ENCODE measurements at regions of chr9 and their contacts with region 1.

Region 1: DNA sequence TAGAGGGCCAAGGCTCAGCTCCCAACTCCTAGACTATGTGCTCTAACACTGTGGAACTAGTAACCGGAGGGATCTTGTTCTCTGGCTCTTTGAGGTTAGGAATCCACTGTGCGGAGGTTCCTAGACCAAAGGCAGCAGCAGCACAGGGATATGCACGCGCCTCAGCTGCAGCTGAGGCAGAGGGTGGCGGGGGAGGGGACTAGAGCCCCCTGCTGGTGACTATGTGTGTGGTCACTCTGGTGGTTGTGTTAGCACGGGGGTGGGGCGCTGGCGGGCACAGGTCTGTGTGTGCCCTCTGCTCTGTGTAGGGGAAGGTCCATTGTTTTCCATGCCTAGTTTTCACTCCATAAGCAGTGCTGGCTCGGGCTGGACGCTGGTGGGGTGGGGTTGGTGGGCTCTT is 458.0 kb upstream of the IZUMO3 start:
- DNase-seq: no peak
- ATAC-seq: peak; percentile 94
- H3K4me3 ChIP-seq: no peak overlapping the region
- H3K27ac ChIP-seq: no peak overlapping the region
- H3K4me1 ChIP-seq: no peaks in the 10 kb centered on the region
- H3K27me3 ChIP-seq: no peaks in the 10 kb centered on the region
- CTCF ChIP-seq: peak in 2 of 3 experiments; percentile 7 to 38; a peak in 2 of 6 replicates
- EP300 ChIP-seq: no peak
- POLR2A ChIP-seq: no peak
- RAD21 ChIP-seq: no peak

Region 2: GRCh38 chr9:24738421-24738961 is 265.2 kb before region 1 on chr9:
- CTCF ChIA-PET with region 1: no interaction called
- POLR2A ChIA-PET with region 1: no interaction called
- RAD21 ChIA-PET with region 1: no interaction called
- SMC1A ChIA-PET with region 1: no interaction called
- in situ Hi-C with region 1: no loop called
- intact Hi-C with region 1: loop called (anchors 5 kb)
- DNase-seq: no peak
- ATAC-seq: no peak
- H3K4me3 ChIP-seq: no peak overlapping the region
- H3K27ac ChIP-seq: no peak overlapping the region
- H3K4me1 ChIP-seq: no peaks in the 10 kb centered on the region
- H3K27me3 ChIP-seq: no peaks in the 10 kb centered on the region
- CTCF ChIP-seq: no peak
- EP300 ChIP-seq: no peak
- POLR2A ChIP-seq: no peak
- RAD21 ChIP-seq: no peak

Region 3: DNA sequence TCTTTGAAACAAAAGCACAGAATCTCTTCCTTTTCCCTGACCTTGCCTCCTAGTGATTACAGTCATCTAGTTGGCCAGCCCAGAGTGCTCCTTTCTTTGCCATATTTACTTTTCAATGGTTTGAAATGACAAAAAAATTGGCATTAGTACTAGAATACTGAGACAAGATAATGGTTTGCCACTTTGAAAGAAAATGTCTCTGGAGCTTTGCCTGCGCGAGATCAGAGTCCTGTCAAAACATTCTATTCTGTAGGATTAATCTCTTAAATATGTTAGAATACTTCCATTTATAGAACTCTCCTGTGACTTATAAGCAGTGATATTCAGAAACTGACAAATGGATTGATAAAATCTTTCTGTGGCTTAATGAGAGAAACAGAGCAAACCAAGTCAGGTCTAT is 26.1 kb after region 1 on chr9:
- CTCF ChIA-PET with region 1: no interaction called
- POLR2A ChIA-PET with region 1: no interaction called
- RAD21 ChIA-PET with region 1: no interaction called
- SMC1A ChIA-PET with region 1: no interaction called
- in situ Hi-C with region 1: no loop called
- intact Hi-C with region 1: no loop called
- DNase-seq: no peak
- ATAC-seq: no peak
- H3K4me3 ChIP-seq: no peak overlapping the region
- H3K27ac ChIP-seq: no peak overlapping the region
- H3K4me1 ChIP-seq: no peaks in the 10 kb centered on the region
- H3K27me3 ChIP-seq: no peaks in the 10 kb centered on the region
- CTCF ChIP-seq: no peak
- EP300 ChIP-seq: no peak
- POLR2A ChIP-seq: no peak
- RAD21 ChIP-seq: no peak

Region 4: GRCh38 chr9:25048098-25048724 is 44.5 kb after region 1 on chr9:
- CTCF ChIA-PET with region 1: no interaction called
- POLR2A ChIA-PET with region 1: no interaction called
- RAD21 ChIA-PET with region 1: no interaction called
- SMC1A ChIA-PET with region 1: no interaction called
- in situ Hi-C with region 1: no loop called
- intact Hi-C with region 1: loop called (anchors 10 kb)
- DNase-seq: no peak
- ATAC-seq: no peak
- H3K4me3 ChIP-seq: no peak overlapping the region
- H3K27ac ChIP-seq: no peak overlapping the region
- H3K4me1 ChIP-seq: no peaks in the 10 kb centered on the region
- H3K27me3 ChIP-seq: no peaks in the 10 kb centered on the region
- CTCF ChIP-seq: no peak
- EP300 ChIP-seq: no peak
- POLR2A ChIP-seq: no peak
- RAD21 ChIP-seq: no peak